ENCODE measurements at regions of chr20 and their contacts with region 1.

Region 1: GRCh38 chr20:462199-462991 is at the start of gene TBC1D20:
- DNase-seq: peak; percentile 96
- H3K4me3 Mint-ChIP-seq: peak within 1 kb of the TSS; percentile 95
- H3K27ac Mint-ChIP-seq: peak within 1 kb of the TSS; percentile 92
- H3K4me1 Mint-ChIP-seq: peaks cover 41% of the 10 kb centered on the region
- H3K27me3 Mint-ChIP-seq: peaks cover 2% of the 10 kb centered on the region
- total RNA-seq, gene TBC1D20: 34.3 and 35.4 TPM in 2 replicates

Region 2: GRCh38 chr20:324177-325044 is 138.0 kb before region 1 on chr20:
- intact Hi-C with region 1: no loop called
- DNase-seq: peak; percentile 98
- H3K4me3 Mint-ChIP-seq: peak overlapping the region; percentile 91
- H3K27ac Mint-ChIP-seq: peak overlapping the region; percentile 92
- H3K4me1 Mint-ChIP-seq: peaks cover 16% of the 10 kb centered on the region
- H3K27me3 Mint-ChIP-seq: peaks cover 6% of the 10 kb centered on the region

Region 3: GRCh38 chr20:381581-382290 is 80.7 kb before region 1 on chr20:
- intact Hi-C with region 1: loop called (anchors 2 kb)
- DNase-seq: peak; percentile 94
- H3K4me3 Mint-ChIP-seq: peak overlapping the region; percentile 85
- H3K27ac Mint-ChIP-seq: peak overlapping the region; percentile 85
- H3K4me1 Mint-ChIP-seq: peaks cover 30% of the 10 kb centered on the region
- H3K27me3 Mint-ChIP-seq: no peaks in the 10 kb centered on the region

Region 4: DNA sequence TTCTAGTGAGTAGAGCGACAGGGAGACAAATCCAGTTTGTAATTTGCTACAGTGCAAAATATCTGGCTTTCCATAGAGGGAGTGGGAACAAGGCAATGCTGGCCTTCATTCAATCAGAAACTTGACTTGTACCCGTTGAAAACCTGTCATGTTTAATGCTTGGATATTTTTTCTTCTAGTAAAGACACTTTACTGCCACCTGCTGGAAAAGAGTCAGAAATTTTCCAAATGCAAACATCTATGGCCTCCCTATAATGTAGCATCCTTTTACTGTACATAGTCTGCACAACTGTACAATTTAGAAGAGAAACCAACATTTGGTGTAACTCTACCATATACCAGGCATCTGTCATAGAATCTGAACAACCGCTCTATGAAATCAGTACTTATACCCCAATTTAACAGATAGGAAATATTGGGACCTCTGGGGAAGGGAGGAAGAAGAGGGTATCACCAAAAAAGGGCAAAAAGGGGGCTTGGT is 16.6 kb after region 1 on chr20:
- intact Hi-C with region 1: loop called (anchors 1 kb)
- DNase-seq: peak; percentile 86
- H3K4me3 Mint-ChIP-seq: no peak overlapping the region
- H3K27ac Mint-ChIP-seq: peak overlapping the region; percentile 52
- H3K4me1 Mint-ChIP-seq: peaks cover 31% of the 10 kb centered on the region
- H3K27me3 Mint-ChIP-seq: no peaks in the 10 kb centered on the region